A673 (cell line): ENCODE measurements at regions of chr17 and their contacts with region 1.

Region 1: DNA sequence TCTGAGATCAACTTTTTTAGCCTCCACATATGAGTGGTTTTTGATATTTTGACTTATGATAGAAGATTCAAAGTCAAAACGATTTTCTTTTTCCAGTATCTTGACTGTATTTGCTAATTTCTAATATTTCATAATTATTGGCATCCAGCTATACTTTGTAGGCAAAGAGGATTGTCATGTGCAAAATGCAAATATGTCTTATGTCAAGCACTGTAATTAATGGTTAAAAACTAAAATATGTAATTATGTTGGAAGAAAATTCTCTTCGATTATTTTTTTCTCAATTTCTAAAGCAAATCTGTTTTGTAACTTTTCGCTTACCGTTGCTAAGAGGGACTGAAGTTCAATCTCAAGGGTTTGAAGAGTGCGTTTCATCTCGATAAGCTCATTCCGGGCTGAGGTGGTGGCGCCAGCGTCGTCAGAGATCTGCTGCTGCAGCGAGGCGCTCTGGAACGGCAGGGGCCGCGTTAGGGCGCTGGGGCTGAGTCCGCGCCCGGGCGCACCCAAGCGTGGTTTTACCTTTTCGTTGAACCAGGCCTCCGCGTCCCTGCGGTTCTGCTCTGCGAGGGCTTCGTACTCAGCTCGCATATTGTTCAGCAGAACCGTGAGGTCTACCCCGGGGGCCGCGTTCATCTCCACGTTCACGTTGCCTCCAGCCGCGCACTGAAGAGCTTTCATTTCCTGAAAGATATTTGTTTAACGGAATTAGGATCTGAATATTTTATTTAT is 3.0 kb downstream of the KRT27 start:
- DNase-seq: peak; percentile 24
- H3K4me3 ChIP-seq: peak overlapping the region; percentile 31
- H3K27ac ChIP-seq: no peak overlapping the region
- H3K4me1 ChIP-seq: no peaks in the 10 kb centered on the region
- H3K27me3 ChIP-seq: no peaks in the 10 kb centered on the region
- CTCF ChIP-seq: no peak

Region 2: GRCh38 chr17:40753804-40754203 is 25.5 kb before region 1 on chr17:
- CTCF ChIA-PET with region 1: no interaction called
- POLR2A ChIA-PET with region 1: no interaction called
- intact Hi-C with region 1: loop called (anchors 1 kb)
- DNase-seq: no peak
- H3K4me3 ChIP-seq: no peak overlapping the region
- H3K27ac ChIP-seq: no peak overlapping the region
- H3K4me1 ChIP-seq: peaks cover 13% of the 10 kb centered on the region
- H3K27me3 ChIP-seq: no peaks in the 10 kb centered on the region
- CTCF ChIP-seq: no peak

Region 3: GRCh38 chr17:40810505-40810904 is 31.2 kb after region 1 on chr17:
- CTCF ChIA-PET with region 1: no interaction called
- POLR2A ChIA-PET with region 1: no interaction called
- intact Hi-C with region 1: no loop called
- DNase-seq: no peak
- H3K4me3 ChIP-seq: no peak overlapping the region
- H3K27ac ChIP-seq: no peak overlapping the region
- H3K4me1 ChIP-seq: no peaks in the 10 kb centered on the region
- H3K27me3 ChIP-seq: no peaks in the 10 kb centered on the region
- CTCF ChIP-seq: no peak

Region 4: GRCh38 chr17:41734139-41734948 is 955.0 kb after region 1 on chr17 and contains the start of gene HAP1:
- CTCF ChIA-PET with region 1: no interaction called
- POLR2A ChIA-PET with region 1: no interaction called
- intact Hi-C with region 1: no loop called
- DNase-seq: peak; percentile 9
- H3K4me3 ChIP-seq: peak within 1 kb of the TSS; percentile 39
- H3K27ac ChIP-seq: no peak within 1 kb of the TSS
- H3K4me1 ChIP-seq: no peaks in the 10 kb centered on the region
- H3K27me3 ChIP-seq: peaks cover 26% of the 10 kb centered on the region
- CTCF ChIP-seq: no peak
- total RNA-seq, gene HAP1: 1.4 and 1.5 TPM in 2 replicates